PC-9 (cell line): ENCODE measurements at regions of chr10 and their contacts with region 1.

Region 1: GRCh38 chr10:74262856-74263255 is 111.8 kb downstream of the ADK start:
- DNase-seq: no peak
- H3K4me3 ChIP-seq: no peak overlapping the region
- H3K27ac ChIP-seq: no peak overlapping the region
- H3K4me1 ChIP-seq: no peaks in the 10 kb centered on the region
- H3K27me3 ChIP-seq: no peaks in the 10 kb centered on the region
- CTCF ChIP-seq: no peak

Region 2: GRCh38 chr10:73641328-73642060 is 621.4 kb before region 1 on chr10 and contains the start of gene MYOZ1:
- CTCF ChIA-PET with region 1: no interaction called
- POLR2A ChIA-PET with region 1: no interaction called
- intact Hi-C with region 1: no loop called
- DNase-seq: peak in 1 of 2 experiments; percentile 43
- H3K4me3 ChIP-seq: no peak within 1 kb of the TSS
- H3K27ac ChIP-seq: no peak within 1 kb of the TSS
- H3K4me1 ChIP-seq: peaks cover 7% of the 10 kb centered on the region
- H3K27me3 ChIP-seq: no peaks in the 10 kb centered on the region
- CTCF ChIP-seq: no peak
- total RNA-seq, gene MYOZ1: 0.22 and 0.75 TPM in 2 replicates

Region 3: GRCh38 chr10:74194545-74194944 is 68.3 kb before region 1 on chr10:
- CTCF ChIA-PET with region 1: no interaction called
- POLR2A ChIA-PET with region 1: no interaction called
- intact Hi-C with region 1: no loop called
- DNase-seq: no peak
- H3K4me3 ChIP-seq: no peak overlapping the region
- H3K27ac ChIP-seq: no peak overlapping the region
- H3K4me1 ChIP-seq: peaks cover 41% of the 10 kb centered on the region
- H3K27me3 ChIP-seq: no peaks in the 10 kb centered on the region
- CTCF ChIP-seq: no peak

Region 4: DNA sequence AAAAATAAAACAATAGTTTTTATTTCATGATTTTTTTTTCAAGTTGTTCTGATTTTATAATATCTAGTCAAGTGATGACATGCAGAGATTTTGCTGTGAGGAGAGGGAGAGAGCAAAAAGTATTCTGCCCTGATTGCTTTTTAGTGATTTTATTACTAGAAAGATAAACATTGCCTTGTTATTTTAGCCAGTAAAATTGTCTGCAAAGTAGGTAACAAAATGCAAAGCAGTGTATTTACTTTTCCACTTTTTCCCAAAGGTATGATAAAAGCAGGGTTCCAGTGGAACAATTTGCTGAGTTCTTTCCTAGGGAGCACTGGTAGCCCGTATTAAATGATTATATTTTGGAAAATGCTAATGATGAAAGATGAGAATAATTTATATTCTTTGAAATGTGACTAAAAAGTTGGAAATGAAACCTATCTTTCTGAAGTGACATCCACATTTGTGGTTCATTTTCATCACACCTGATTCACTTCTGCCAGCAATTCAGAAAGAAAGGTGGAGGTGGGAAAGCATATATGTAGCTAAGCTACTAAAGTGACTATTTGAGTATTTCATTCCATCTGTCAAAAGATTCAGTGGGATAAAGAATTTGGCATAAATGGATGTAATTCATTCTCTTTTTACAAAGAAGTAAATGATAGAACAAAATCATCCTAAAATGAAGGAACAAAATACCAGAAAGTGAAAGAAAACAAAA is 188.4 kb after region 1 on chr10:
- CTCF ChIA-PET with region 1: interaction called, 12 read pairs
- POLR2A ChIA-PET with region 1: no interaction called
- intact Hi-C with region 1: no loop called
- DNase-seq: no peak
- H3K4me3 ChIP-seq: no peak overlapping the region
- H3K27ac ChIP-seq: no peak overlapping the region
- H3K4me1 ChIP-seq: no peaks in the 10 kb centered on the region
- H3K27me3 ChIP-seq: no peaks in the 10 kb centered on the region
- CTCF ChIP-seq: no peak

Region 5: DNA sequence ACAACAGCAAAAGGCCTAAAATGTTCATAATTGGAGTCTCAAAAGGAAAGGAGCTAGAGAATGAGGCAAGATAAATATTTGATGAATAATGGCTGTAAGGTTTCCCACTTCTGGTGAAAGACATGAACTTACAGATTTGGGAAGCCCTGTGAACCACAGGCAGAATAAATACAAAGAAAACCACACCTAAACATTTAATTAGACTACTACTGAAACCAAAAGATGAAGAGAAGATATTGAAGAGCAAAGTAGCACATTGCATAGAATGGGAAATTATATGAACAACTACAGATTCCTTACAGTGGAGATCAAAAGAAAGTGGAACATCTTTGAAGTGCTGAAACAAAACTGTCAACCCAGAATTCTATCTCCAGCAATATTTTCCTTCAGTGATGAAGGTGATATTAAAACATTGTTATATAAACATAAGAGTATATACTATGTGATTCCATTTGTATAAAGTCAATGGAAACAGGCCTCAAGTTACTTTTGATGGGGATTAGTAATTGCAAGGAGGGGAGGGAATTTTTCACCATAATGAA is 372.2 kb after region 1 on chr10:
- CTCF ChIA-PET with region 1: no interaction called
- POLR2A ChIA-PET with region 1: no interaction called
- intact Hi-C with region 1: loop called (anchors 5 kb)
- DNase-seq: no peak
- H3K4me3 ChIP-seq: no peak overlapping the region
- H3K27ac ChIP-seq: no peak overlapping the region
- H3K4me1 ChIP-seq: no peaks in the 10 kb centered on the region
- H3K27me3 ChIP-seq: no peaks in the 10 kb centered on the region
- CTCF ChIP-seq: no peak

Region 6: DNA sequence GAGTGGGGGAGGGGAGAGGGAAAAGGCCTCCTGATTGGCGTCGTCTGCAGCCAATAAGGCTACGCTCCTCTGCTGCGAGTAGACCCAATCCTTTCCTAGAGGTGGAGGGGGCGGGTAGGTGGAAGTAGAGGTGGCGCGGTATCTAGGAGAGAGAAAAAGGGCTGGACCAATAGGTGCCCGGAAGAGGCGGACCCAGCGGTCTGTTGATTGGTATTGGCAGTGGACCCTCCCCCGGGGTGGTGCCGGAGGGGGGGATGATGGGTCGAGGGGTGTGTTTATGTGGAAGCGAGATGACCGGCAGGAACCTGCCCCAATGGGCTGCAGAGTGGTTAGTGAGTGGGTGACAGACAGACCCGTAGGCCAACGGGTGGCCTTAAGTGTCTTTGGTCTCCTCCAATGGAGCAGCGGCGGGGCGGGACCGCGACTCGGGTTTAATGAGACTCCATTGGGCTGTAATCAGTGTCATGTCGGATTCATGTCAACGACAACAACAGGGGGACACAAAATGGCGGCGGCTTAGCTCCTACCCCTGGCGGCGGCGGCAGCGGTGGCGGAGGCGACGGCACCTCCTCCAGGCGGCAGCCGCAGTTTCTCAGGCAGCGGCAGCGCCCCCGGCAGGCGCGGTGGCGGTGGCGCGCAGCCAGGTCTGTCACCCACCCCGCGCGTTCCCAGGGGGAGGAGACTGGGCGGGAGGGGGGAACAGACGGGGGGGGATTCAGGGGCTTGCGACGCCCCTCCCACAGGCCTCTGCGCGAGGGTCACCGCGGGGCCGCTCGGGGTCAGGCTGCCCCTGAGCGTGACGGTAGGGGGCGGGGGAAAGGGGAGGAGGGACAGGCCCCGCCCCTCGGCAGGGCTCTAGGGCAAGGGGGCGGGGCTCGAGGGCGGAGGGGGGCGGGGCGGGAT is 563.5 kb after region 1 on chr10 and contains the start of gene KAT6B:
- CTCF ChIA-PET with region 1: no interaction called
- POLR2A ChIA-PET with region 1: no interaction called
- intact Hi-C with region 1: loop called (anchors 10 kb)
- DNase-seq: peak; percentile 99 to 100
- H3K4me3 ChIP-seq: peak within 1 kb of the TSS; percentile 85
- H3K27ac ChIP-seq: peak within 1 kb of the TSS; percentile 91
- H3K4me1 ChIP-seq: peaks cover 19% of the 10 kb centered on the region
- H3K27me3 ChIP-seq: no peaks in the 10 kb centered on the region
- CTCF ChIP-seq: peak; percentile 38; the same call in 1 of the 2 replicates
- total RNA-seq, gene KAT6B: 26.3 and 30.9 TPM in 2 replicates

Region 7: GRCh38 chr10:75019370-75019769 is 756.5 kb after region 1 on chr10:
- CTCF ChIA-PET with region 1: no interaction called
- POLR2A ChIA-PET with region 1: no interaction called
- intact Hi-C with region 1: loop called (anchors 1 kb)
- DNase-seq: peak in 1 of 2 experiments; percentile 43
- H3K4me3 ChIP-seq: no peak overlapping the region
- H3K27ac ChIP-seq: no peak overlapping the region
- H3K4me1 ChIP-seq: no peaks in the 10 kb centered on the region
- H3K27me3 ChIP-seq: no peaks in the 10 kb centered on the region
- CTCF ChIP-seq: peak; percentile 64

Region 8: DNA sequence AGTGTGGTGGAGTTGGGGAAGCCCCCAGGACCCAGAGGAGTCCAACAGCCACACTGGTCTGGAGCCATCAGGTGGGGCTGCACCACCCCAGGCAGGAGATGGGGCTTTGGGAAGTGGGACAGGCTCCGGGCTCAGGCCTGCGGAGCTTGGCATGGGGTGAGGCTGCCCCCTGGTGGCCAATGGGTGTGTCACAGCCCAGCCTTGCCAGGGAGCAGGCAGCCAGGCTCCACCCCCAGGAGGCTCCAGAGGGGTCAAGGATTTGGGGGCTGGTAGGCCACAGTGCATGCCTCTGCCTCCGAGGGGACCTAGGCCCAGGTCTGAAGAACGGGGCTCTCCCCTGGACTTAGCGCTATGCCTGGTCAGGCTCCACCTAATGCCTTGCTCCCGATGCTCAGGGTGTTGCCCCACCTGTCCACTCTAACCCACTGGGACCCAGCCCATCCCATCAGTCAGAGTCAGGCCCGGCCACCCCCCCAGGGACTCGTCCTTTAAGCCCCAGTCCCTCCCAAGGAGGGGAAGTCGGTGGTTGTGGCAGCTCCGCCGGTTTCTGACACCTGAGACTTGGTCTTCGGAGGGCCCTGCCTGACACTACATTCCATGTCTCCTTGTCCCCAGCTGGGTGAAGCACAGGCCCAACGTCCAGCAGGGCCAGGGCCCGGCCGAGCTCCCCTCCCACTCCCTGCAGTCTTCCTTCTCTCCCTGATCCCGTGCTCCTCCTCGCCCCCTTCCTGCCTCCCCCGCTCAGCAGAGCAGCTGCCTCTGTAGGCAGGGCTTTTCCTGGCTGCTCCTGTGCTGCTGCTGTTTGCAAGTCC is 837.3 kb after region 1 on chr10:
- CTCF ChIA-PET with region 1: no interaction called
- POLR2A ChIA-PET with region 1: no interaction called
- intact Hi-C with region 1: loop called (anchors 1 kb)
- DNase-seq: peak; percentile 52 to 84
- H3K4me3 ChIP-seq: no peak overlapping the region
- H3K27ac ChIP-seq: no peak overlapping the region
- H3K4me1 ChIP-seq: no peaks in the 10 kb centered on the region
- H3K27me3 ChIP-seq: no peaks in the 10 kb centered on the region
- CTCF ChIP-seq: peak; percentile 94